ENCODE measurements at regions of chr10 and their contacts with region 1.

Region 1: DNA sequence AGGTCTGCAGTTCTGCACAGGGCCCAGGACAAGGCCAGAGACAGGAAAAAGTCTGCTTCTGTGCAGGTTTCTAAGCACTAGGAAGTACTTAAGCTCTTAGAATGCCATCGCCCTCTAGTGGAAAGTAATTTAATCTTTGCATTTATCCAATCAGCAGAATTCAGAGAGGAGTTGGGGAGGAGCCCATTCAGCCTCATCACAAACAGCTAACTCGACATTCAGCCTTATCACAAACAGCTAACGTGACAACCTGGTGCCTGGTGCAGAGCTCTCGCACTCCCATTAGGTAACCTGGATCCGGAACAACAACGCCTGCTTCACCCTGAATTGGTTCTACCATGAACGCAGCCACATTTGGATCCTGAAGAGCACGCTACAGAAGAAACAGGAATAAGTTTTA is 15.2 kb downstream of the OAT start:
- DNase-seq: peak in 18 of 35 experiments; percentile 5 to 82 (median 16)
- ATAC-seq: peak; percentile 95 to 99 (median 98)
- H3K4me3 ChIP-seq: no peak overlapping the region
- H3K4me3 Mint-ChIP-seq: no peak overlapping the region
- H3K27ac ChIP-seq: peak overlapping the region; percentile 30
- H3K27ac Mint-ChIP-seq: peak overlapping the region; percentile 70 to 86
- H3K4me1 ChIP-seq: peaks cover 0 to 10% of the 10 kb centered on the region in 2 experiments
- H3K4me1 Mint-ChIP-seq: peaks cover 10 to 12% (median 11%) of the 10 kb centered on the region in 3 donors
- H3K27me3 ChIP-seq: no peaks in the 10 kb centered on the region
- H3K27me3 Mint-ChIP-seq: no peaks in the 10 kb centered on the region

Region 2: GRCh38 chr10:123994417-123995081 is 409.0 kb before region 1 on chr10:
- CTCF ChIA-PET with region 1: interaction called, 7 to 14 read pairs
- POLR2A ChIA-PET with region 1: no interaction called
- DNase-seq: peak; percentile 32 to 84 (median 67)
- ATAC-seq: peak; percentile 77 to 89 (median 82)
- H3K4me3 ChIP-seq: peak overlapping the region in 1 of 2 donors; percentile 4
- H3K4me3 Mint-ChIP-seq: peak overlapping the region; percentile 28 to 67 (median 60)
- H3K27ac ChIP-seq: no peak overlapping the region
- H3K27ac Mint-ChIP-seq: no peak overlapping the region
- H3K4me1 ChIP-seq: peaks cover 0 to 21% of the 10 kb centered on the region in 2 experiments
- H3K4me1 Mint-ChIP-seq: peaks cover 15 to 20% (median 16%) of the 10 kb centered on the region in 3 donors
- H3K27me3 ChIP-seq: peaks cover 11 to 60% of the 10 kb centered on the region in 2 experiments
- H3K27me3 Mint-ChIP-seq: peaks cover 57 to 72% of the 10 kb centered on the region in 2 donors

Region 3: DNA sequence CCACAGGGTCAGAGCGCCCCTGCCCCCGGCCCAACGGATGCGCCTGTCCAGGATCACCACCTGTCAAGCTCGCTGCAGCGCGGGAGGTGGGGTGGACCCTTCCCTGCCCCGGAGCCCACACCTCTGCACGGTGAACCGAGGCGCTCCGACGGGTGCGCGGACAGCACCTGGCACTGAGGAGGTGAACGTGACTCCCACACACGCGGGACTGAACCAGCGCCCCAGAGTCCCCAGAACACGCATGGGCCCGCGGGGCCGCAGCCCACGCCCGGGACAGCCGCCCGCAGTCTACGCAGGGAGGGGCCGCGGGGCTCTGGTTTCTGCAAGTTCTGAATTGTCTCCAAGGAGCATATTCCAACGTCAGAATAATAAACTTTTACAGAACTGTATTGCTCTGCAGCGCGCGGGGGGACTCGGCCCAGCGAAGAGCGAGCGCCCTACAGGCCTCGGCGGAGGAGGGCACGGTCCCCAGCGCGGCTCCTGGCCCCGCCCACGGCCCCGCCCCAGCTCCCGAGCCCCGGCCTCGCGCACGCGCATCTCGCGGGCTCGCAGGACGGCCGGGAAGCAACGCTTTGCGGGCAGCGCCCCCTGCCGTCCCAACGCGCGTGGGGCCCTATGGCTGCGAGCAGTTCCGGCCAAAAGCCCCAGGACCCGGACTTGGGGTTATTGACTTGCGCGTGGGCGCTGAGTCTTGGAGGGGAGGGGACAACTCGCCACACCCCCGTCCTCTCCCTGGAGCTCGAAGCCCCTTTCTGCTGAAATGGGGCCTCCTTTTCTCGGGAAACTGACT is 14.5 kb before region 1 on chr10:
- CTCF ChIA-PET with region 1: interaction called, 4 to 18 read pairs
- POLR2A ChIA-PET with region 1: no interaction called
- DNase-seq: peak; percentile 73 to 97 (median 88)
- ATAC-seq: peak; percentile 97 to 98 (median 97)
- H3K4me3 ChIP-seq: peak overlapping the region; percentile 35 to 53
- H3K4me3 Mint-ChIP-seq: peak overlapping the region; percentile 46 to 57 (median 57)
- H3K27ac ChIP-seq: peak overlapping the region; percentile 18
- H3K27ac Mint-ChIP-seq: peak overlapping the region in 1 of 2 donors; percentile 58
- H3K4me1 ChIP-seq: peaks cover 0 to 12% of the 10 kb centered on the region in 2 experiments
- H3K4me1 Mint-ChIP-seq: peaks cover 0 to 5% (median 3%) of the 10 kb centered on the region in 3 donors
- H3K27me3 ChIP-seq: peaks cover 3 to 33% of the 10 kb centered on the region in 2 experiments
- H3K27me3 Mint-ChIP-seq: peaks cover 6 to 7% of the 10 kb centered on the region in 2 donors

Region 4: DNA sequence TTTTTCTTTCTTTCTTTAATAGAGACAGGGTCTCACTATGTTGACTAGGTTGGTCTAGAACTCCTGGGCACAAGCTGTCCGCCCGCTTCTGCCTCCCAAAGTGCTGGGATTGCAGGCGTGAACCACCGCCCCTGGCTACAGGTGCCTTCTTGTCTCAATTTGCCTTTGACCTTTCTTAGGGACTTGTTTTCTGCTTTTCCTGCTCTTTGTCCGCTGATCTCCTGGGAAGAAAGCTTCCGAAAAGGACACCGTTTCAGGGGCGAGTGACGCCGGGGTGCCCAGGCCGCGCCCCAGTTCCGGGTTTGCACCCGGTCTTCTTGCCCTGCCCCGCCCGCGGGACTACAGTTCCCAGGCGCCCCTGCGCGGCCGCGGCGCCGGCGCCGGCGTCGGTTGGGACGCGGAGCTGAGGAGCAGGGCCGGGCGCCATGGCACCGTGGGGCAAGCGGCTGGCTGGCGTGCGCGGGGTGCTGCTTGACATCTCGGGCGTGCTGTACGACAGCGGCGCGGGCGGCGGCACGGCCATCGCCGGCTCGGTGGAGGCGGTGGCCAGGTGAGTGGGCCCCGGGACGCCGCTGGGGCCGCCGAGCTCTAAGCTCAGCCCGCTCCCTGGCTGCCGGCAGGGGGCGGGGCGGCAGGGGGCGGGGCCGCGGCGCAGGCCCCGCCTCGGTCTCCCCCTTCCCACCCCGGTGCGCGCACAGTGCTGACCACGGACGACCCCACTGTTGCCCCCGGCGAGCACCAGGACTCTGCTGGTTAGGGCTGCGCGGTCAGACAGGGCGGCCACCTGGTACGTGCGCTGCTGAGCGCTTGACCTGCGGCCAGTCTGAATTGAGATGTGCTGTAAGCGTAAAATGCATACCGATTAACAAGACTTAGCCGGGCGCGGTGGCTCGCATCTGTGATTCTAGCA is 58.1 kb after region 1 on chr10 and contains the start of gene LHPP:
- CTCF ChIA-PET with region 1: interaction called in 1 of 2 experiments, 12 read pairs
- POLR2A ChIA-PET with region 1: no interaction called
- DNase-seq: peak; percentile 74 to 89 (median 83)
- ATAC-seq: peak; percentile 96 to 98 (median 97)
- H3K4me3 ChIP-seq: peak within 1 kb of the TSS; percentile 58 to 60
- H3K4me3 Mint-ChIP-seq: peak within 1 kb of the TSS; percentile 79 to 92 (median 87)
- H3K27ac ChIP-seq: peak within 1 kb of the TSS; percentile 74
- H3K27ac Mint-ChIP-seq: peak within 1 kb of the TSS; percentile 97 to 98
- H3K4me1 ChIP-seq: peaks cover 3 to 31% of the 10 kb centered on the region in 2 experiments
- H3K4me1 Mint-ChIP-seq: peaks cover 30 to 32% (median 30%) of the 10 kb centered on the region in 3 donors
- H3K27me3 ChIP-seq: peaks cover 0 to 11% of the 10 kb centered on the region in 2 experiments
- H3K27me3 Mint-ChIP-seq: peaks cover 15% of the 10 kb centered on the region in 2 donors
- total RNA-seq, gene LHPP: 13.2 to 27.4 (median 22.3) TPM

Region 5: DNA sequence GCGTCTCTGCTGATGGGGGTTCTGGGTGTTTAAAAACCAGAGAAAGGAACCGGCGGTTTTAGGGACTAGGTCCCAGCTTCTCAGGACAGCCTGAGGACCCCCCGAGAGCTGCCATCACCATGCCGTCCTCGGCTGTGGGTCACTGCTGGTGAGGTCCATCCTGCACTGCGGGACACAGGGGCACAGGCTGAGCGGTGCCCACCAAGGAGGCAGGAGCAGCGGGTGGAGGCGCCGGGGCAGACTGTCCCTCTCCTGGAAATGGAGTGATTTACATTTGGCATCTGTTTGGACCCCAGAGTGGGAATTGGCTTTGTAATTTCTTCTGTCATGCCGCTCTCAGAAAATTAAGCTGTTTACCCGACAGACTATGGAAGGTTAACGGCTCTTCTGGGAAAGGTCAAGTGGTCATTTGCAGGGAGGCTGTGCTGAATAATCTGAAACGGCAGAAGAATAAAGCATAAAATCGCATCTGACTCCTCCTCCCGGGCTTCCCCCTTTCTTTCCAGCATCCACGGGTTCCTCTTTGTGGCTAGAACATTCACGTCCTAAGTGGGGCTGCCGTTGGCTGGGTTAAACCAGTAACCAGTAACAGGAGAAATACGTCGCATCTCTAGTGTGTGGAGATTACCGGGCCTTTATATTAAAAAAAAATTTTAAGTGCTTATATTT is 89.8 kb after region 1 on chr10:
- CTCF ChIA-PET with region 1: no interaction called
- POLR2A ChIA-PET with region 1: no interaction called
- DNase-seq: no peak
- ATAC-seq: no peak
- H3K4me3 ChIP-seq: no peak overlapping the region
- H3K4me3 Mint-ChIP-seq: peak overlapping the region in 1 of 3 donors; percentile 67
- H3K27ac ChIP-seq: no peak overlapping the region
- H3K27ac Mint-ChIP-seq: no peak overlapping the region
- H3K4me1 ChIP-seq: peaks cover 2% of the 10 kb centered on the region in 2 experiments
- H3K4me1 Mint-ChIP-seq: peaks cover 11 to 24% (median 11%) of the 10 kb centered on the region in 3 donors
- H3K27me3 ChIP-seq: no peaks in the 10 kb centered on the region
- H3K27me3 Mint-ChIP-seq: no peaks in the 10 kb centered on the region

Measured in T-cell (primary cell).